BJ (cell line): ENCODE measurements at regions of chr7 and their contacts with region 1.

Region 1: DNA sequence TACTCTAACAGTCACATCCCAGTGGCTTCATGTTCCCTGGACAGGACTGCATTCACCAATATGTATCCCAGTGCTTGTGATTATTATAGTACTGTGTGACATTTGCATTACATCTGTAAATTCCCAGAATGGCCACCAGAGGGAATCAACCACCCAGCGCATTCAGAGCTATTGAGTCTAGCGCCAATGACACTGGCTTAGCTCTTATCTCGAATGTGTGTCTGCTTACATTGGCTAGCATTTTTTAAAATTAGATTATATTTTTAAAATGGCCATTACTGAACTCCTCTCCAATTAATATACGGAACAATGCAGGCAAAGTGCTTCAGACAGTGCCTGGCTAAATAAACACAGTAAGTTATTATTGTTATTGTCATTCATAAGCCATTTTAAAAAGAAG is 36.3 kb downstream of the TRIL start:
- DNase-seq: no peak
- H3K4me3 ChIP-seq: no peak overlapping the region
- H3K27me3 ChIP-seq: peaks cover 6% of the 10 kb centered on the region
- CTCF ChIP-seq: peak; percentile 85

Region 2: GRCh38 chr7:28125431-28126409 is 796.1 kb before region 1 on chr7:
- CTCF ChIA-PET with region 1: no interaction called
- POLR2A ChIA-PET with region 1: no interaction called
- DNase-seq: no peak
- H3K4me3 ChIP-seq: no peak overlapping the region
- H3K27me3 ChIP-seq: no peaks in the 10 kb centered on the region
- CTCF ChIP-seq: no peak

Region 3: DNA sequence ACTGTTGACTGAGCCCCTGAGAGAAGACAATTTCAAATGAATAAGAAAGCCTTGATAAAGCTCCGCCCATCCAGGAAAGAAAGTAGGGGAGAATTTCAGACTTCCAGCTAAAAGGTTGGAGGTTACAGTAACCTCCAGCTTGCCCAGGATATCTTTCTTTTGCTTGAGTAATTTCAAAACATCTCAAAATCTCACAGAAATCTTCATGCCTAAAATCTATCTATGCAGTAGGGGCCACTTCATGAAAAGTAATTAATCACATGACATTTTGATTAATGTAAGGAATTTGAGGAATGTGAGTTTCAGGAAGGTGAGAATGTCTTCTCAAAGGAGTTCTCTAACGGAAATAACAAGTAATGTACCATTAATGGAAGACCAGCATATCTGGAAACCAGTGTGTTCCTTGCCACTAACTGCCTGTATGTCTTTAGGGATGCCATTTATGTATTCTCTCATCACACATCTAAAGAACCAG is 12.1 kb after region 1 on chr7:
- CTCF ChIA-PET with region 1: interaction called, 50 read pairs
- POLR2A ChIA-PET with region 1: no interaction called
- DNase-seq: no peak
- H3K4me3 ChIP-seq: no peak overlapping the region
- H3K27me3 ChIP-seq: peaks cover 5% of the 10 kb centered on the region
- CTCF ChIP-seq: no peak

Region 4: GRCh38 chr7:28955718-28956619 is 34.1 kb after region 1 on chr7:
- CTCF ChIA-PET with region 1: interaction called, 24 read pairs
- POLR2A ChIA-PET with region 1: no interaction called
- DNase-seq: no peak
- H3K4me3 ChIP-seq: no peak overlapping the region; the same call in 1 of the 2 replicates
- H3K27me3 ChIP-seq: peaks cover 38% of the 10 kb centered on the region
- CTCF ChIP-seq: peak; percentile 35; the same call in 1 of the 2 replicates

Region 5: DNA sequence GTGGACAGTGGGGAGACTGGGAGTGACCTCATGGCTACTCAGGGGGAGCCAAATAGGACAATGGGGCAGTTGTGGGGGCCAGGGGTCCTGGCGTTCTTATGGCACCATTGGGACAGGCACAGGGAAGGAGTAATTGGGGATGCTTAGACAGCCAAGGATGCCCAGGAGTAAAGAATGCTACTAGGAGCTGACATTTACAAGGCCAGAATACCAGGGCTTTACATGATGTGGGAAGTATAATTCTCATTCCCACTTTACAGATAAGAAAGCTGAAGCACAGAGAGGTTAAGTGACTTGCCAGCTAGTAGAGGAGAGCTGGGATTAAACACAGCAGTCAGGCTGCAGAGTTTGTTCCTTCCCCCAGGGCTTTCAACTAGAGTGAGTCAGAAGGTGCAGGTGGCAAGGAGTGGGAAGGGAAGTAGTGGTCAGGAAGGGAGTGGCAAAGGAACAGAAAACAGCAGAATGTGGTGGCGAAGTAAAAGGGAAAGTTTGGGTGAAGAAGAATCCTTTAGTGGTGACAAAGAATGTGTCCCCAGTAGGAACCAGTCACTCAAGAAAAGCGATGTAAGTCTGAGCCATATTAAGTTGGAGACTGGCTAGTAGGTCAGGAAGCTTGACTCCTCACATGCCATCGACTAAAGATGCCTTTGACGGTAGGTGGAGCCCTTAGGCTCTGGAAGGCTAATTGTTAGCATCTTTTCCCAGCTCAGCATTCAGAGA is 191.7 kb after region 1 on chr7:
- CTCF ChIA-PET with region 1: interaction called, 64 read pairs
- POLR2A ChIA-PET with region 1: no interaction called
- DNase-seq: no peak
- H3K4me3 ChIP-seq: no peak overlapping the region
- H3K27me3 ChIP-seq: no peaks in the 10 kb centered on the region
- CTCF ChIP-seq: 0 out of 2 replicates have a peak, but pooled peaks have one; percentile 6